ENCODE measurements at regions of chr13 and their contacts with region 1.

Region 1: GRCh38 chr13:20495082-20496023 is 30.3 kb downstream of the CRYL1 start:
- DNase-seq: peak in 1 of 2 donors; percentile 84
- ATAC-seq: peak; percentile 90 to 97 (median 96)
- H3K4me3 ChIP-seq: no peak overlapping the region
- H3K4me3 Mint-ChIP-seq: no peak overlapping the region
- H3K27ac ChIP-seq: no peak overlapping the region
- H3K27ac Mint-ChIP-seq: no peak overlapping the region
- H3K4me1 ChIP-seq: no peaks in the 10 kb centered on the region
- H3K4me1 Mint-ChIP-seq: peaks cover 0 to 5% of the 10 kb centered on the region in 2 donors
- H3K27me3 ChIP-seq: no peaks in the 10 kb centered on the region
- H3K27me3 Mint-ChIP-seq: no peaks in the 10 kb centered on the region
- CTCF ChIP-seq: peak; percentile 97

Region 2: GRCh38 chr13:20553311-20553710 is 58.0 kb after region 1 on chr13:
- intact Hi-C with region 1: no loop called
- DNase-seq: no peak
- ATAC-seq: no peak
- H3K4me3 ChIP-seq: no peak overlapping the region
- H3K4me3 Mint-ChIP-seq: no peak overlapping the region
- H3K27ac ChIP-seq: no peak overlapping the region
- H3K27ac Mint-ChIP-seq: no peak overlapping the region
- H3K4me1 ChIP-seq: no peaks in the 10 kb centered on the region
- H3K4me1 Mint-ChIP-seq: no peaks in the 10 kb centered on the region
- H3K27me3 ChIP-seq: no peaks in the 10 kb centered on the region
- H3K27me3 Mint-ChIP-seq: no peaks in the 10 kb centered on the region
- CTCF ChIP-seq: no peak

Region 3: GRCh38 chr13:20582026-20582425 is 86.7 kb after region 1 on chr13:
- intact Hi-C with region 1: loop called (anchors 1 kb)
- DNase-seq: no peak
- ATAC-seq: no peak
- H3K4me3 ChIP-seq: no peak overlapping the region
- H3K4me3 Mint-ChIP-seq: no peak overlapping the region
- H3K27ac ChIP-seq: no peak overlapping the region
- H3K27ac Mint-ChIP-seq: no peak overlapping the region
- H3K4me1 ChIP-seq: no peaks in the 10 kb centered on the region
- H3K4me1 Mint-ChIP-seq: no peaks in the 10 kb centered on the region
- H3K27me3 ChIP-seq: no peaks in the 10 kb centered on the region
- H3K27me3 Mint-ChIP-seq: no peaks in the 10 kb centered on the region
- CTCF ChIP-seq: no peak

Region 4: DNA sequence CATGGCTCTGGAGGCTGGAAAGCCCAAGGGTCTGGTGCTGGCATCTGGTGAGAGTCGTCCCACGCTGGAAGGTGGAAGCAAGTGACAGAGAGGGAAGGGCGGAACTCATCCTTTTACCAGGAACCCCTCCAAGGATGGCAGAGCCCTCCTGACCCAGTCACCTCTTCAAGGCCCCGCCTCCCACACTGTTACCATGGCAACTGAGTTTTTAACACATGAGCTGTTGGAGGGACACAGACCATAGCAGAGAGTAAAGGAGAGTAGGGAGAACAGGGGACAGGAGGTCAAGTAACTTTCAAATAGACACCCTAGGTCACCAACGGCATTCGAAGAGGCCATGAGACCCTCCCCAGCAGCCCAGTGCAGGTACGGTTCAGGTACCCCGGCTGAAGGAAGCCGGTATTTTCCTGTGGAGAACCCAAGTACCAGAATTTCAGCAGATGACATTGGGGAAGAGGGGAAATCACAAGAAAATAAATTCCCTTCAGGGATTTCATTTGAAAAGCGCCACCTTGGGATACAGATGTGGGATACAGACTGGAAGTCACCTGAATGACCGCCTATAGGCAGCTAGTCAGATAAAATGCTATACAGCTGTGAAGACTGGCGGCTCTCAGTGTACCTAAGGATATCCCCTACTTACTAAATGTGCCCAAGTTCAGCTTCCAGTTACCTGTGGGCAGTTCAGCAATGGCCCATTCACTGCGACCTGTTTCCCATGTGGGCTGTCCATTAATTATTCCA is 216.1 kb after region 1 on chr13:
- intact Hi-C with region 1: loop called (anchors 1 kb)
- DNase-seq: peak in 1 of 2 donors; percentile 17
- ATAC-seq: no peak
- H3K4me3 ChIP-seq: no peak overlapping the region
- H3K4me3 Mint-ChIP-seq: no peak overlapping the region
- H3K27ac ChIP-seq: no peak overlapping the region
- H3K27ac Mint-ChIP-seq: no peak overlapping the region
- H3K4me1 ChIP-seq: peaks cover 7% of the 10 kb centered on the region
- H3K4me1 Mint-ChIP-seq: peaks cover 7 to 9% of the 10 kb centered on the region in 2 donors
- H3K27me3 ChIP-seq: no peaks in the 10 kb centered on the region
- H3K27me3 Mint-ChIP-seq: peaks cover 18 to 24% of the 10 kb centered on the region in 2 donors
- CTCF ChIP-seq: no peak

Region 5: DNA sequence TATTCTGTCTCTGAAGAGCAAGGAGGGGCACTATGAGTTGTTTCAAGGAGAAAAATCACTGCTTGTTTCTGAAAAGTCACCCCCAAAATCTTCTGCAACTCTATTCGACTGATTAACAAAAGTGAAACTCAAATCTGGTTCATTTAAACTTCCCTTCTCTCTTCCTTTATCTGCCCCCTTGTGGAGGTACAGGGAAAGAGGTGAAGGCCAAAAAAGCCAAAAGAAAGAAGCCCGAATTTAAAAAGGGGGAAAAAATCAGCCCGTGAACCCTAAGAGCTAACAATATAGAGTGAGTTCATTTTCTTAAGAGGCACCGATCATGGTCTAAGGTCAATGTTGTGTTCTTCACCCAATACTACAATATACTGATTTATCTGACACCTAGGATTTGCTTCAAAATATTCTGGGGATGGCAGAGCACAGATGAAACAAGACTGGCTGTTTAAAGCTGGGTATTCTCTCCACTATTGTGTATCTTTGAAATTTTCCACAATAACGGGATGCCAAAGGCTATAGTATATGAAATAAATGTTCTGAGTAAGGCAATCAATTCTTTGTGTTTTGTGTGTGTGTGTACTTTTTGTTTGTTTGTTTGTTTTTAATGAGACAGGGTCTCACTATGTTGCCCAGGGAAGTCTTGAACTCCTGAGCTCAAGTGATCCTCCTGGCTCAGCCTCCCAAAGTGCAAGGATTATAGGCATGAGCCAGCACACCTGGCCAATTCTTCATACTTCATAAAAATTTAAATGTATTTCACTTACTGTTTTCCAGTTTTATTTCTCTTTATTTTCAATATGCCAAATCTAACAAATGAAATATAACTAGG is 333.4 kb after region 1 on chr13:
- intact Hi-C with region 1: loop called (anchors 1 kb)
- DNase-seq: peak in 1 of 2 donors; percentile 81
- ATAC-seq: peak; percentile 82 to 94 (median 87)
- H3K4me3 ChIP-seq: no peak overlapping the region
- H3K4me3 Mint-ChIP-seq: peak overlapping the region; percentile 55
- H3K27ac ChIP-seq: no peak overlapping the region
- H3K27ac Mint-ChIP-seq: peak overlapping the region; percentile 62 to 72
- H3K4me1 ChIP-seq: no peaks in the 10 kb centered on the region
- H3K4me1 Mint-ChIP-seq: peaks cover 7 to 8% of the 10 kb centered on the region in 2 donors
- H3K27me3 ChIP-seq: no peaks in the 10 kb centered on the region
- H3K27me3 Mint-ChIP-seq: no peaks in the 10 kb centered on the region
- CTCF ChIP-seq: peak; percentile 77

Region 6: DNA sequence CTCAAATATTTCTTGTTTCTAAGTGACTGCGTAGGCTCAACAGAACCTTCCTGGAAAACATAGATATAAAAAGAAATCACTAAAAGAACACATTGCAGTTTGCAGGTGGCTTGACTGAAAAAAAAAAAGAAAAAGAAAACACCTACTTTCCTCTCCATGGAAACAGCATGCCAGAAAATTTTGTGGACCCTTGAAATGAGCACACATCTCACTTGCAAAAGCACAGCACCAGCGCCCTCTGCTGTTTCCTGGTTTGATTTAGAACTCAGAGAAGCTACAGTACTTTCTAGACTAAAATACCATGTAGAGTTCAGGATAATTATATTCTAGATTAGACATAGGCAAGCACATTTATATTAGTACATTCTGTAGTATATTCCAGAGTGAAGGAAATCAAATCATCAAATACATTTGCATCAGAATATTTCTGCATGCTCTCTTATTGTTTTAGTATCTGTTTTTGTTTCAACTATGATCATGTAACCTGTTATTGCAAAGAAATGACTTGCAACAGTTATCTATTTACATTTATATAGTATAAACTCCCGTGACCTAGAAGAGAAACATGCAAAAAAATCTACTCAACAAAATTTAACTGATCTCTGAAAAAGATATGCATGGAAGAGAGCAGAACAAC is 429.5 kb after region 1 on chr13:
- intact Hi-C with region 1: loop called (anchors 1 kb)
- DNase-seq: peak; percentile 52 to 84
- ATAC-seq: peak in 1 of 3 donors; percentile 61
- H3K4me3 ChIP-seq: no peak overlapping the region
- H3K4me3 Mint-ChIP-seq: no peak overlapping the region
- H3K27ac ChIP-seq: no peak overlapping the region
- H3K27ac Mint-ChIP-seq: no peak overlapping the region
- H3K4me1 ChIP-seq: no peaks in the 10 kb centered on the region
- H3K4me1 Mint-ChIP-seq: no peaks in the 10 kb centered on the region
- H3K27me3 ChIP-seq: no peaks in the 10 kb centered on the region
- H3K27me3 Mint-ChIP-seq: peaks cover 0 to 4% of the 10 kb centered on the region in 2 donors
- CTCF ChIP-seq: peak; percentile 89

Measured in natural killer cell (primary cell).